ENCODE measurements at regions of chr21 and their contacts with region 1.

Region 1: DNA sequence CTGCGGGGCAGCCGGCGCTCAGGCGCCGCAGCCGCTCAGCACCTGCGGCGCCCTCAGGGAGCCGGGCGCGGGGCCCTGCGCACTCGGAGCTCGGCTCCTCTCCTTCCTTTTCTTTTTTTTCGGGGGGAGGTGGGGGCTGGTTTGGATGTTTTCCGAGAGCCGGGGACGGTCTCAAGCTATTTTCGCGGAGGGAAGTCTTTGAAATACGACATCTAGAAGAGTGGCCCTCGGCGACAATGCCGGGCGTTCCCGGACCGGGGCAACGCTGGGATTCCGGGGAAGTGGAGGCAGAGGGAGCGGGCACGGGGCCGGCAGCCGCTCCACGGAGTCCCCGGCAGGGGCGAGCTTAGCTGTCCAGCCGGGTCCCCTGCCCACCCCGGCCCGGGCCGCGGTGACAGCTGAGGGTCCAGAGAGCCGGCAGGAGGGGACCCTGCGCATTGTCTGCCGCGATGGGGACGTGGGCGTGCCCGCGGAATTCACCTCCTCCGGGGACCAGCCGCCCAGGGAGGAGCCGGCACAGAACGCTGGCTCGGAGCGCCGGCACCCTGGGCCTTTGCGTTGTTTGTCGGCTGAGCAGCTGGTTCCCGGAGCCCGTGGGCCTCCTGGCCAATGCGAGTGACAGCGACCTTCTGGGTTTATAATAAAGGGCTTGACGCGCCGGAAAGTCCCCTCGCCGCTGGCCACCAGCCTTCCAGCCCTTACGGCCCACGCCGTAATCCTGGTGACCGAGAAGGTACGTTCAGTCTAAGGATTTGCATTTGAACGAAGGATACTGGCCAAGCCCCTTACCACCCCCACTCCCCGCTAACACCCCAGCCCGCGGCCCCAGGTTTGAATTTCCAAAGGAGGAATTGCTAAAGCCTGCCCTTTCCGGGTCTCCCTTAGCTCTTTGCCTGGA is 582 bp downstream of the SLC37A1 start:
- DNase-seq: peak; percentile 81
- ATAC-seq: peak; percentile 74
- H3K4me3 ChIP-seq: peak overlapping the region; percentile 63 to 94 (median 84)
- H3K4me3 Mint-ChIP-seq: peak overlapping the region; percentile 88
- H3K27ac ChIP-seq: peak overlapping the region; percentile 90 to 91
- H3K27ac Mint-ChIP-seq: peak overlapping the region; percentile 77
- H3K4me1 ChIP-seq: peaks cover 14 to 26% of the 10 kb centered on the region in 2 donors
- H3K4me1 Mint-ChIP-seq: peaks cover 39% of the 10 kb centered on the region
- H3K27me3 ChIP-seq: no peaks in the 10 kb centered on the region
- H3K27me3 Mint-ChIP-seq: no peaks in the 10 kb centered on the region
- CTCF ChIP-seq: no peak

Region 2: DNA sequence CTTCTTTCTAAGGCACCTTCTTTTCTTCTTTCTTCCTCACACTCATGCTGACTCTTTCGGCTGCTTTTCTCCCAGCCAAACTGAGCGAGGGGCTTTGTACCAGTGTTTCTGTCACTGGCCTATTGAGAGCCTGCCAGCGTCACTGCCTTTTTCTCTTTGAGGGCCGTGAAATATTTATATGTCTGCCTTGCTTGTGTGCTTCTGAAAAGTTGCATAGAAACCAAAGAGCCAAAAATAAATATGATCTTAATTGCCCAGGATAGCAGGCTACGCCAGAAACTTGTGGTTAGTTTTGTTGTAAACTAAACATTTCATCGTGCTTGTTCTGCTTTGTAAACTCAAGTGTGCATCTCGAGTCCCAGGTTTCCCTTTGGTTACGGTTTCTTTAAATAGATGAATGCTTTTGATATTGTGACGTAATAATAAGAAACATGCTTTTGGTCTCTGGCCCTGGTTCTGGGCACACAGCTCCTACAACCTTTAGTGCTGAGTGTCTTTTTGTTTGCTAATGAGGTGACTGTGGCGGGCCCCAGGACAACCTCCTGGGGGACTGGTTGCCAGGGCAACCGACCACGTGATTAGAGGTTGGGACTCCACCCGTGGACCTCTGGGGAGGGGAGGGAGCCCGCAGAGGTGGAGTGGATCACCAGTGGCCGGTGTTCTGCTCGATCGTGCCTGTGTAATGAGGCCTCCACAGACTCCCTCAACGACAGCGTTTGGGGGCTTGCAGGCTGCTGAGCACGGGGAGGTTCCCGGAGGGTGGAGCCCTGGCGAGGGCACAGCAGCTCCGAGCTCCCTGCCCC is 10.3 kb after region 1 on chr21:
- CTCF ChIA-PET with region 1: interaction called, 7 read pairs
- POLR2A ChIA-PET with region 1: interaction called, 4 read pairs
- intact Hi-C with region 1: loop called (anchors 1 kb)
- DNase-seq: peak; percentile 96
- ATAC-seq: peak; percentile 85
- H3K4me3 ChIP-seq: peak overlapping the region in 4 of 5 experiments; percentile 29 to 65 (median 41)
- H3K4me3 Mint-ChIP-seq: peak overlapping the region; percentile 88
- H3K27ac ChIP-seq: peak overlapping the region; percentile 97 to 99
- H3K27ac Mint-ChIP-seq: peak overlapping the region; percentile 99
- H3K4me1 ChIP-seq: peaks cover 54 to 59% of the 10 kb centered on the region in 2 donors
- H3K4me1 Mint-ChIP-seq: peaks cover 78% of the 10 kb centered on the region
- H3K27me3 ChIP-seq: no peaks in the 10 kb centered on the region
- H3K27me3 Mint-ChIP-seq: no peaks in the 10 kb centered on the region
- CTCF ChIP-seq: no peak

Region 3: DNA sequence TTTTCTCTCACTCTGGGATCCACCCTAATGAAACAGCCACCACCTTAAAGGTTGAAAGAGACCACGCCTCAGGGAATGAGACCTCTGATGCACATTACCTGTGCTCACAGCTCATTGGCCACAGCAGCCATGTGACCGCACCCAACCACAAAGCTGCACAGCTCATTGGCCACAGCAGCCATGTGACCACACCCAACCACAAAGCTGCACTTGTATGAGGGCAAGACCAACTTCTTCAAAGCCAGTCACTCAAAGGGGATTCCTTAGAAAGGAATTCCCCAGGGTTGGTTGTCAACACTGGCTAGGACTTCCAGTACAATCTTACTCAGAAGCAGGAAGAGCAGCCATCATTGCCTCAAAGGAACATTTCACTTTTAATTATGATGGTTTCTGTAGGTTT is 95.6 kb after region 1 on chr21:
- CTCF ChIA-PET with region 1: no interaction called
- POLR2A ChIA-PET with region 1: no interaction called
- intact Hi-C with region 1: no loop called
- DNase-seq: peak; percentile 50
- ATAC-seq: peak; percentile 73
- H3K4me3 ChIP-seq: no peak overlapping the region
- H3K4me3 Mint-ChIP-seq: peak overlapping the region; percentile 16
- H3K27ac ChIP-seq: no peak overlapping the region
- H3K27ac Mint-ChIP-seq: peak overlapping the region; percentile 67
- H3K4me1 ChIP-seq: no peaks in the 10 kb centered on the region
- H3K4me1 Mint-ChIP-seq: peaks cover 9% of the 10 kb centered on the region
- H3K27me3 ChIP-seq: peaks cover 0 to 7% (median 0%) of the 10 kb centered on the region in 4 experiments
- H3K27me3 Mint-ChIP-seq: no peaks in the 10 kb centered on the region
- CTCF ChIP-seq: no peak

Region 4: GRCh38 chr21:42666023-42666747 is 152.0 kb after region 1 on chr21:
- CTCF ChIA-PET with region 1: no interaction called
- POLR2A ChIA-PET with region 1: no interaction called
- intact Hi-C with region 1: no loop called
- DNase-seq: peak; percentile 45
- ATAC-seq: peak; percentile 31
- H3K4me3 ChIP-seq: no peak overlapping the region
- H3K4me3 Mint-ChIP-seq: no peak overlapping the region
- H3K27ac ChIP-seq: no peak overlapping the region
- H3K27ac Mint-ChIP-seq: no peak overlapping the region
- H3K4me1 ChIP-seq: peaks cover 6 to 16% of the 10 kb centered on the region in 2 donors
- H3K4me1 Mint-ChIP-seq: peaks cover 9% of the 10 kb centered on the region
- H3K27me3 ChIP-seq: no peaks in the 10 kb centered on the region
- H3K27me3 Mint-ChIP-seq: peaks cover 7% of the 10 kb centered on the region
- CTCF ChIP-seq: no peak

Measured in B cell (primary cell).